B cell (primary cell): ENCODE measurements at regions of chr7 and their contacts with region 1.

Region 1: DNA sequence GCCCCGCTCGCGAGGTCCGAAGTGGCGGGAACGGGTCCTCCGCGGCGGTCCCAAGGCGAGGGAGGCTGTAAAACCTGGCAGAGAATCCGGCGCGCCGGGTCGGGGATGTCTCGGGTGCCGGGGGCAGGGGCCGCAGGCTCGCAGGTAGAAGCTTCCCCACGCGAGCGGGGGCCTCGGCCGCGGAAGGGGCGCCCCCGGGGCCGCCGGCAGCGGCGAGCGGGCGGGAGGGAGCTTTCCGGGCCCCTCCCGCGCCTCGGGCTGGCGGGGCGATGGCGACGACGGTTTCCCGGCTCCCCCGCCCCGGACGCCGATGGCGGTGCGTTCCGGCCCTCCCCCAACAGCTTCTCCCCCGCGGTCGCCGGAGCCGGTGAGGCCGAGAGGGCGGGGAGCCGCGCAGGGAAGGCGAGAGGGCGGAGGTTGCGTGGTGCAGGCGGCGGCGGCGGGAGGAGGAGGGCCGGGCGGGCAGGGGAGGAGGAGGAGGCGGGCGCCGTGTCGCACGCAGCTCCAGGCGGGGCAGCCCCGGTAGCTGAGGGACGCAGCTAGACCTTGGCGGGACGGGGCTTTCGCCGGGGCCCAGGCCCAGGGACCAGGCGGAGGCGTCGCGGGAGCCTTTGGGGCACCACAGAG is at the start of gene CUL1:
- DNase-seq: peak; percentile 90
- ATAC-seq: peak; percentile 81
- H3K4me3 ChIP-seq: peak within 1 kb of the TSS; percentile 76 to 93 (median 84)
- H3K4me3 Mint-ChIP-seq: peak within 1 kb of the TSS; percentile 91
- H3K27ac ChIP-seq: peak within 1 kb of the TSS; percentile 69 to 91
- H3K27ac Mint-ChIP-seq: peak within 1 kb of the TSS; percentile 92
- H3K4me1 ChIP-seq: peaks cover 30 to 31% of the 10 kb centered on the region in 2 donors
- H3K4me1 Mint-ChIP-seq: peaks cover 46% of the 10 kb centered on the region
- H3K27me3 ChIP-seq: no peaks in the 10 kb centered on the region
- H3K27me3 Mint-ChIP-seq: no peaks in the 10 kb centered on the region
- CTCF ChIP-seq: no peak
- total RNA-seq, gene CUL1: 51.1 and 53.5 TPM in 2 replicates

Region 2: GRCh38 chr7:148436571-148436970 is 261.9 kb before region 1 on chr7:
- CTCF ChIA-PET with region 1: no interaction called
- POLR2A ChIA-PET with region 1: no interaction called
- intact Hi-C with region 1: no loop called
- DNase-seq: peak; percentile 32
- ATAC-seq: peak; percentile 54
- H3K4me3 ChIP-seq: peak overlapping the region in 4 of 5 experiments; percentile 29 to 66 (median 46)
- H3K4me3 Mint-ChIP-seq: peak overlapping the region; percentile 81
- H3K27ac ChIP-seq: peak overlapping the region; percentile 36 to 38
- H3K27ac Mint-ChIP-seq: peak overlapping the region; percentile 90
- H3K4me1 ChIP-seq: peaks cover 27 to 60% of the 10 kb centered on the region in 2 donors
- H3K4me1 Mint-ChIP-seq: peaks cover 56% of the 10 kb centered on the region
- H3K27me3 ChIP-seq: no peaks in the 10 kb centered on the region
- H3K27me3 Mint-ChIP-seq: no peaks in the 10 kb centered on the region
- CTCF ChIP-seq: no peak

Region 3: GRCh38 chr7:148503875-148504487 is 194.5 kb before region 1 on chr7:
- CTCF ChIA-PET with region 1: no interaction called
- POLR2A ChIA-PET with region 1: no interaction called
- intact Hi-C with region 1: loop called (anchors 5 kb)
- DNase-seq: peak; percentile 61
- ATAC-seq: no peak
- H3K4me3 ChIP-seq: no peak overlapping the region
- H3K4me3 Mint-ChIP-seq: no peak overlapping the region
- H3K27ac ChIP-seq: no peak overlapping the region
- H3K27ac Mint-ChIP-seq: no peak overlapping the region
- H3K4me1 ChIP-seq: peaks cover 11 to 23% of the 10 kb centered on the region in 2 donors
- H3K4me1 Mint-ChIP-seq: peaks cover 47% of the 10 kb centered on the region
- H3K27me3 ChIP-seq: no peaks in the 10 kb centered on the region
- H3K27me3 Mint-ChIP-seq: no peaks in the 10 kb centered on the region
- CTCF ChIP-seq: peak; percentile 97

Region 4: GRCh38 chr7:148563583-148564274 is 134.8 kb before region 1 on chr7:
- CTCF ChIA-PET with region 1: no interaction called
- POLR2A ChIA-PET with region 1: no interaction called
- intact Hi-C with region 1: loop called (anchors 10 kb)
- DNase-seq: no peak
- ATAC-seq: no peak
- H3K4me3 ChIP-seq: peak overlapping the region in 1 of 5 experiments; percentile 20
- H3K4me3 Mint-ChIP-seq: peak overlapping the region; percentile 70
- H3K27ac ChIP-seq: no peak overlapping the region
- H3K27ac Mint-ChIP-seq: peak overlapping the region; percentile 5
- H3K4me1 ChIP-seq: peaks cover 8 to 13% of the 10 kb centered on the region in 2 donors
- H3K4me1 Mint-ChIP-seq: peaks cover 15% of the 10 kb centered on the region
- H3K27me3 ChIP-seq: no peaks in the 10 kb centered on the region
- H3K27me3 Mint-ChIP-seq: peaks cover 3% of the 10 kb centered on the region
- CTCF ChIP-seq: no peak

Region 5: GRCh38 chr7:148611692-148612091 is 86.8 kb before region 1 on chr7:
- CTCF ChIA-PET with region 1: no interaction called
- POLR2A ChIA-PET with region 1: no interaction called
- intact Hi-C with region 1: no loop called
- DNase-seq: no peak
- ATAC-seq: no peak
- H3K4me3 ChIP-seq: no peak overlapping the region
- H3K4me3 Mint-ChIP-seq: no peak overlapping the region
- H3K27ac ChIP-seq: no peak overlapping the region
- H3K27ac Mint-ChIP-seq: no peak overlapping the region
- H3K4me1 ChIP-seq: no peaks in the 10 kb centered on the region
- H3K4me1 Mint-ChIP-seq: no peaks in the 10 kb centered on the region
- H3K27me3 ChIP-seq: peaks cover 0 to 8% (median 0%) of the 10 kb centered on the region in 4 experiments
- H3K27me3 Mint-ChIP-seq: peaks cover 34% of the 10 kb centered on the region
- CTCF ChIP-seq: no peak

Region 6: GRCh38 chr7:148940702-148941597 is 242.4 kb after region 1 on chr7:
- CTCF ChIA-PET with region 1: interaction called, 8 read pairs
- POLR2A ChIA-PET with region 1: interaction called, 6 read pairs
- intact Hi-C with region 1: loop called (anchors 1 kb)
- DNase-seq: peak; percentile 91
- ATAC-seq: peak; percentile 80
- H3K4me3 ChIP-seq: peak overlapping the region; percentile 85 to 98 (median 89)
- H3K4me3 Mint-ChIP-seq: peak overlapping the region; percentile 95
- H3K27ac ChIP-seq: peak overlapping the region; percentile 77 to 88
- H3K27ac Mint-ChIP-seq: peak overlapping the region; percentile 97
- H3K4me1 ChIP-seq: peaks cover 6 to 12% of the 10 kb centered on the region in 2 donors
- H3K4me1 Mint-ChIP-seq: peaks cover 13% of the 10 kb centered on the region
- H3K27me3 ChIP-seq: no peaks in the 10 kb centered on the region
- H3K27me3 Mint-ChIP-seq: no peaks in the 10 kb centered on the region
- CTCF ChIP-seq: no peak